Left lung (tissue), 14 donors: ENCODE measurements at regions of chr7 and their contacts with region 1.

Region 1: DNA sequence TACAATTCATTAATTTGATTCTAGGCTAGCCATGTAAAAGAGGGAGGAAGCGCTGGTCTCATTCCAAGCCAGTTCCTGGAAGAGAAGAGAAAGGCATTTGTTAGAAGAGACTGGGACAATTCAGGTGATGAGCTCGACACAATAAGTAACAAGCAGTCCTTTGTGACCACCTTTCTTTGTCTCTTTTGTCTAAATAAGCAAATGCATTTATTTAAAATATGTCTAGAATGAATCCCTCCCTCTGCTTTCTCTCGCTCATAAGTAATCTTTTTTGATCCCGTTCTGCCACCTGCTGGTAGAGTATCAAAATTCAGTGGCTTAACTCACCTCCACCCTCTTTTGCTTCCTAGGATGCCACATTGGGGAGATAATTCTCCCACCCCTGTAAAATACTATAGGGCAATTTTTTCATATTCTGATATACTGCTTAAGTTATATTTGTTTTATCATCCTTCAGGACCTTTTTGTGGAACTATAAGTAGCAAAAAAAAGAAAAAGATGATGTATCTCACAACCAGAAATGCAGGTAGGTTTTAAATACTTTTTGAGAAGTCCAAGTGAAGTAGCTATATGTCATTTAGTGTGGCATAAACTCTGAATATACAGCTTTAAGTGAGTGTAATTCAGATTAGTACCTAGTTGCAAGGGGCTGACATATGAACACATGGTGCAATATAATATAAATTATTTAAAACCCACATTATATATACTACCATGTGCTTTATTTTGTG is 91.5 kb downstream of the GSDME start:
- DNase-seq: peak in 2 of 4 donors; percentile 43 to 55
- ATAC-seq: peak; percentile 75
- H3K4me3 ChIP-seq: no peak overlapping the region
- H3K27ac ChIP-seq: no peak overlapping the region
- H3K4me1 ChIP-seq: no peaks in the 10 kb centered on the region
- H3K27me3 ChIP-seq: no peaks in the 10 kb centered on the region
- CTCF ChIP-seq: peak; percentile 46 to 63

Region 2: DNA sequence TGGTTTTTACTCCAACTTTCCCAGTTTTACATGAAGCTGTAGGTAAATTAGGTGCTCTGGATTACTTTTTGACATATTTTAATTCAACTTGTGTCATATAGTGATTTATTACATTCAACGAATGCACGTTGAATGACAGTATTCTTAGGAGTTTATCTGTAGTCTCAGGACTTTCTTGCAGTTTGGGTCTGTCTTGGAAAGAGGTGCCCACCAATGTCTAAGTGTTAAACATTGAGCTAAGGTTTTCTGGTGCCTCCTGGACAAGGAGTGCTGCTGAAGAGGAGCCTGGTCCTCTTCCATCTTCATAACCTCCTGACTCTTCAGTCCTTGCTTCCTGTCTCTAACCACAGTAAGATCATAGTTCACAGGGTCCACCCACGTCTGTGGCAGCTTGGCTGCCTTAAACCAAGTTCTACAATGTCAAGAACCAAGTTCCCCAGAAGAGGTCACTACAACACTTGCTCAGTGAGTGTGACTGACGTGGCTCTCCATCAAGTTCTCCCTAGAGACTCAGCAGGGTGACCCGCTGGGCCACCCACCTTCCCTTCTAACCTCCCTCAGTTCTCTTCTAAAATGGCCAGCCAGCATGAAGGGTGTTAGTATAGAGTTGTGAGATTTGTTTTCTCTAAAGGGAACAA is 375.6 kb before region 1 on chr7:
- intact Hi-C with region 1: loop called in 1 of 2 experiments (anchors 5 kb)
- DNase-seq: peak in 2 of 4 donors; percentile 15 to 49
- ATAC-seq: peak; percentile 96
- H3K4me3 ChIP-seq: no peak overlapping the region
- H3K27ac ChIP-seq: no peak overlapping the region
- H3K4me1 ChIP-seq: peaks cover 0 to 2% of the 10 kb centered on the region in 2 donors
- H3K27me3 ChIP-seq: peaks cover 29 to 48% of the 10 kb centered on the region in 2 donors
- CTCF ChIP-seq: peak; percentile 13 to 19

Region 3: GRCh38 chr7:25297278-25297677 is 631.5 kb after region 1 on chr7:
- intact Hi-C with region 1: no loop called
- DNase-seq: no peak
- ATAC-seq: no peak
- H3K4me3 ChIP-seq: no peak overlapping the region
- H3K27ac ChIP-seq: no peak overlapping the region
- H3K4me1 ChIP-seq: no peaks in the 10 kb centered on the region
- H3K27me3 ChIP-seq: no peaks in the 10 kb centered on the region
- CTCF ChIP-seq: no peak